Uterus (tissue), 4 donors: ENCODE measurements at regions of chr10 and their contacts with region 1.

Region 1: DNA sequence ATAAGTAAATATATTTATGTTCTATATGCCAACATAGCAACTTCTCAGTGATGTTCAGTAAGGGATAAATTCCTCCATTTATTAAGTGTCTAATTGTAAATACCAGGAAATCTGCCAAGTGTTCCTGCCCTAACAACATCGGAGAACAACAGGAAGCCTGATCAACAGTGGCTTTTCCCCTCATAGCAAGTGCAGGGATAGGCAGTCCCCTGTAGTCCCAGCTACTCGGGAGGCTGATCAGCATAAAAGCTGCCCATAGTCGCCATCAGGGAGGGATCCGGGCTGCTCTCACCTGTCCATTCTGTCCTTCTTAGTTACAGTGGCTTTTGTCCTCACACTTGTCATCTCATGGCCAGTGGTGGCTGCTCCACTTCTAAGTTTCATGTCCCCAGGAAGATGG is 141.3 kb downstream of the IDE start:
- DNase-seq: no peak
- H3K4me3 ChIP-seq: no peak overlapping the region
- H3K27ac ChIP-seq: no peak overlapping the region
- H3K4me1 ChIP-seq: no peaks in the 10 kb centered on the region
- H3K27me3 ChIP-seq: no peaks in the 10 kb centered on the region
- CTCF ChIP-seq: no peak
- POLR2A ChIP-seq: no peak

Region 2: DNA sequence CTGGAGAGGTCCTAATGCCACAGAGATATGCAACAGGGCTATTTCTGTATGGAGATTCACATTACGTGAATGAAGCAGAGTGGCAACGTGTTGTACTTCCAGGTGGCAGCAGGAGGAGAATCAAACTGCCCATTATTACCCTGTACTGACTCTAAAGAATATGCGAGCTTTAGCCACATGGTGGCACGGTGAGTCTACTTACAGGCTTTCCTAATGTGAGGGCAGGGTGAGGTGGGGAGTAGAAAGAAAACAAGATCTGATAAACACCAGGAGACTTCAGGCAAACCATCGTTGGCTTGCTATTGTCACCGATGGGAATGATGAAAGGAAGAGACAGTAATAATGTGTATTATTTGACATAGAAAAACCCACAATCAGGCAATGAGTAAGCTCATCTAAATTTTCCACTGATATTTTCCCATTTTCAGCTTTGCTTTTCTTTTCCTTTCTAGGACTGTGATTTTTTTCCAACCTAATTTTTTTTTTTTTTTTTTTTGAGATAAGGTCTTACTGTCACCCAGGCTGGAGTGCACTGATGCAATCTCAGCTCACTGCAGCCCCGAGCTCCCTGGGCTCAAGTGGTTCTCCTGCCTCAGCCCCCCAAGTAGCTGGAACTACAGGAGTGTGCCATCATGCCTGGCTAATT is 344.7 kb before region 1 on chr10:
- intact Hi-C with region 1: loop called (anchors 10 kb)
- DNase-seq: peak; percentile 55 to 72
- H3K4me3 ChIP-seq: no peak overlapping the region
- H3K27ac ChIP-seq: no peak overlapping the region
- H3K4me1 ChIP-seq: no peaks in the 10 kb centered on the region
- H3K27me3 ChIP-seq: no peaks in the 10 kb centered on the region
- CTCF ChIP-seq: peak; percentile 72 to 91 (median 82)
- POLR2A ChIP-seq: no peak

Region 3: DNA sequence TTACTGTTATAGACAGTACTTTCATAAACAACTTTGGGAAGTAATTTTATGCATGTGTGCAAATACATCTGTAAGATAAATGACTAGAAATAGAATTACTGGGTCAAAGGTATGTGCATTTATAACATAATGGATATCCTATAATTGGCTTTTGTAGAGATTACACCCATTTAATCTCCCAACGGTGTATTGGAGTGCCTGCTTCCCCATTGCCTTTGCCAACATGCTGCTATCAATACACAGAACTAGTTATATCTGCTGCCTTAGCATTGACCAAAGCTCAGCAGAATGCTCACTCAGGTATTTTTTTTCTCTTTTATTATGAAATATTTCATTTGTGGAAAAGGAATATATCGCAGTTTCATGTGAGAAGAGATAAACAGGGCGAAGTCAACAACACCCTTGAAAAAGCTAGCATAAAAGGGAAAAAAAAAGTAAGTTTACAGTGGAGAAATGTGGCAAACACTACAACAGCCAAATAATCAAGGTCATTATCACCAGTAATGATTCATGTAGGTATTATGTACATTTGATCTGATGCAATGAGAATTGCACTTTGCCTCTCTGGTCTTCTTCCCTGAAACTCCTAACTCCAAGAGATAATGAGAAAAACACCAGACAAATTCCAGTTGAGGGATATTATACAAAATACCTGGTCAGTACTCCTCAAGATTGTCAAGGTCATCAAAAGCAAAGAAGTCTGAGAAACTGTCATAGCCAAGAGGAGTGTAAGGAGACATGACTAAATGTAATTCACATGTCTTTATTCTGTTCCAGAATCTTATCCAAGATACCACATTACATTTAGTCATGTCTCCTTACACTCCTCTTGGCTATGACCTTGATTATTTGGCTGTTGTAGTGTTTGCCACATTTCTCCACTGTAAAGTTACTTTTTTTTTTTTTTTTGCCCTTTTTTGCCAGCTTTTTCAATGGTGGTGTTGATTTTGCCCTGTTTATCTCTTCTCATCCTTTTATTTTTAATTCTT is 104.9 kb before region 1 on chr10:
- intact Hi-C with region 1: no loop called
- DNase-seq: no peak
- H3K4me3 ChIP-seq: no peak overlapping the region
- H3K27ac ChIP-seq: no peak overlapping the region
- H3K4me1 ChIP-seq: no peaks in the 10 kb centered on the region
- H3K27me3 ChIP-seq: no peaks in the 10 kb centered on the region
- CTCF ChIP-seq: no peak
- POLR2A ChIP-seq: no peak